ENCODE measurements at regions of chr6 and their contacts with region 1.

Region 1: DNA sequence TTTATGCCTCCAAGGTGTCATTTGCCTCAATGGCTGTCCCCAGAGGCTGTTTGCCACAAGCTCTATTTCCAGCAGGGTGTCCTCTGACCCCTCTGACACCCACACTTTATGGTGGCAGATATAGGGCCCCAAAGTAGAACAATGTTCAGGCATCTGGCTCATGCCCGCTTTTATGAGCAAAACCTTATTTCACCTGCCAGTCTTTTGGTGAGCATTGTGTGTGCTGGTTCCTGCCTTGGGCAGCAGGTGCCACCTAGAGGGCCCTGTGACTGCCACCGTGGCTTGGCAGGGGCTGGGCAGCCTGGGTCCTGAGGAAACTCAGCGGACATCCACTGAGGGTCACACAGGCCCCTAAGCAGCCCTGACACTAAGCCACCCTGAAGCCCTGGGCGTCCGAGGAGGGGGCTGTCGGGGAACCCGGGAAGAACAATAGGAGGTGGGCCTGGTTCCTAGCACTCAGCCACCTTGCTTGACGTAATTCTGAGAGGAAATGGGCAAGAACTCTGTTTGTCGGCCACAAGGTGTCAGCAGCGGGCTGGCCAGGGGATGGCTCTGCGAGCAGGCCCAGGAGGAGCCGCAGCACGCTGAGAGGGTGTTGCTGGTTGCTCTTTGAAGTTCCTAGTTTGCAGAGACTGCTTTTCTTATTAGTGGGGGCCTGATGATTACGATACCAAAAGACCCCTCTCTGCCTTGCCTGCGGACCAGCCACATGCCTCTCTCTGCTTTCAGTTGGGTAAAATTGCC is 148.9 kb downstream of the SCML4 start:
- DNase-seq: peak; percentile 78
- H3K4me3 Mint-ChIP-seq: no peak overlapping the region
- H3K27ac Mint-ChIP-seq: no peak overlapping the region
- H3K4me1 Mint-ChIP-seq: peaks cover 21% of the 10 kb centered on the region
- H3K27me3 Mint-ChIP-seq: peaks cover 17% of the 10 kb centered on the region

Region 2: DNA sequence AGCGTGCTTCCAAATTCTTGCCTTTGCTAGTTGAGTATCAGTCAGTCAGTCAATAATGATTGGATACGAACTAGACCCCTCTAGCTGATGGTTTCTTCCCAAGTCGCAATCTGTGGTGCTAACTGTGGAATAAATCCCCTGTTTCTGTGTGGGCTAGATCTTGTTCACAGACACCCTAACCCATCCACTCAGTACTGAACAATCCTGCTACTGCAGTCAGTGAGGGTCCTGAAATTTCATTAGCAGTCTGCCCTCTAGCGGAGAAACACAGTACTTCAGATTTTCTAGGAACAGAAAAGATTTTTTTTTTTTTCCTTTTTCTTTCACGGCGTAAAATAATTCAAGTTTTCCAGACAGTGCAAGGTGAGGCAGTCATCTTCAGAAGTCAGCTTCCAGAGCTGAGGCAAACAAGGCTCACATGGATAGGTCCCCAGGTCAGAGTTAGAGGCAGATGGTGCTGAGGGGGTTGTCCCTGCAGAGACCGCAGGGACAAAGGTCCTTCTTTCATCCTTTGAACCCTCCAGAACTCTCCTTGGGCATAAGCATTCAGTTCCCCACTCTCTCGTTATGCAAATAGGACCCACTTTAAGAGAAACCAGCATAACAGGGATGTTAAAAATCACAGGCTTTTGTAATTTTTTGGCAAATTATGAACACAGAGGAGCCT is 29.3 kb after region 1 on chr6:
- intact Hi-C with region 1: loop called (anchors 2 kb)
- DNase-seq: no peak
- H3K4me3 Mint-ChIP-seq: no peak overlapping the region
- H3K27ac Mint-ChIP-seq: no peak overlapping the region
- H3K4me1 Mint-ChIP-seq: peaks cover 6% of the 10 kb centered on the region
- H3K27me3 Mint-ChIP-seq: peaks cover 17% of the 10 kb centered on the region

Region 3: DNA sequence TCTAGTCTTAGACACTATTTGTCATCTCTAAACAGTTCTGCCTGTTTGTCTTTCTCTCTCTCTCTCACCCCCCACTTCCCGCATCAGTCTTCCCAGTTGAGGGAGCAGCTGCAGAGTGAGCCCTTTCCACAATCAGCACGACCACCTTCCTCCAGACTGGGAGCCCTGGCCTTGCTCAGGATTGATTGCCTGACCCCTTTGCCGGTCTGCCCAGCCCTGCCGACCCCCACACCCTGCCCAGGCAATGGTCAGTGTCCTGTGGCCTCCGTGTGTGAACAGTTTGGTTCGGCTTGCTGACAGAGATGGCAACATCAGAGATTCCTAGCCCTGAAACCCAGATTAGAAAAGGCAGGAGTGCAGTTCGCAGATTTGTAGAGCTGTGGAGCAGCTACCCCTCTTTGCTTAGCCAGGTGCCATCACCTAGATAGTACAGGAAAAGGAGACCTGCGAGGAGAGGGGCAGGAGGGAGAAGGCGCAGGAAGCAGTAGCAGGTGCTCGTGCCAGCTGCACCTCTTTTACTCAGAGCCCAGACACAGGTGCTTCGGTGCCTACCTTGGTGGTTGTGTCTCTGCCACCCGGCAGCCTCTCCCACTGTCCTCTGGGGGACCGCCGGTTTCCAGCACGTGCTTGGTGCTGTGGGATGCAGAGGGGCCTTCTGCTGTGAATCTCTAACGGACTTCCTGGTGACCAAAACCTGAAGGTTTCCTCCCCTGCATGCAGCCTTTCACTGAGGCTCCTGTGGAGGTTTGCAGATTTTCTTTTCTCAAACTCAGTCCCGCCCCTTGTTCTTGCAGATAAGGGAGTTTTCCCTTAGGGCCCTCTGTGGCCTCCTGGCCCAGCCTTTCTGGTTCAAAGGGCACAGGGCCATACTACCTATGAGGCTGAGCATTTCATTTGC is 56.5 kb after region 1 on chr6:
- intact Hi-C with region 1: loop called (anchors 5 kb)
- DNase-seq: no peak
- H3K4me3 Mint-ChIP-seq: peak overlapping the region; percentile 68
- H3K27ac Mint-ChIP-seq: no peak overlapping the region
- H3K4me1 Mint-ChIP-seq: peaks cover 48% of the 10 kb centered on the region
- H3K27me3 Mint-ChIP-seq: peaks cover 37% of the 10 kb centered on the region

Region 4: GRCh38 chr6:107866606-107867301 is 191.6 kb after region 1 on chr6:
- intact Hi-C with region 1: loop called (anchors 2 kb)
- DNase-seq: no peak
- H3K4me3 Mint-ChIP-seq: no peak overlapping the region
- H3K27ac Mint-ChIP-seq: no peak overlapping the region
- H3K4me1 Mint-ChIP-seq: peaks cover 12% of the 10 kb centered on the region
- H3K27me3 Mint-ChIP-seq: peaks cover 6% of the 10 kb centered on the region

Region 5: DNA sequence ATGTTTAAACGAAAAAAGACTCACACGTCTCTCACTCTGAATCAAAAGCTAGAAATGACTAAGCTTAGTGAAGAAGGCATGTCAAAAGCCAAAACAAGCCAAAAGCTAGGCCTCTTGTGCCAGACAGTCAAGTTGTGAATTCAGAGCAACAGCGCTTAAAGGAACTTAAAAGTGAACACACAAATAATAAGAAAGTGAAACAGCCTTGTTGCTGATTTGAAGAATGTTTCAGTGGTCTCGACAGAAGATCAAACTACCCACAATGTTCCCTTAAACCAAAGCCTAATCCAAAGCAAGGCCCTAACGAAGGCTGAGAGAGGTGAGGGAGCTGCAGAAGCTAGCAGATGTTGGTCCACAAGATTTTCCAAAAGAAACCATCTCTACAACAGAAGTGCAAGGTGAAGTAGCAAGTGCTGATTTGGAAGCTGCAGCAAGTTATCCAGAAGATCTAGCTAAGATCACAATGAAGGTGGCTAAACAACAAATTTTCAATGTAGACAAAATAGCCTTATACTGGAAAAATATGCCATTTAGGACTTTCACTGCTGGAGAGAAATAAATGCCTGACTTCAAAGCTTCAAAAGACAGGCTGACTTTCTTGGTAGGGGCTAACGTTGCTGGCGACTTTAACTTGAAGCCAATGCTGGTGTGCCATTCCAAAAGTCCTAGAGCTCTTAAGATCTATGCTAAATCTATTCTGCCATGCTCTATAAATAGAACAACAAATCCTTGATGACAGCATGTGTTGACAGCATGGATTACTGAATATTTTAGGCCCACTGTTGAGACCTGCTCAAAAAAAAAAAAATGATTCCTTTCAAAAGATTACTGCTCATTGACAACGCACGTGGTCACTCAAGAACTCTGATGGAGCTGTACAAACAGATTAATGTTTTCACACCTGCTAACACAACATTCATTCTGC is 242.5 kb after region 1 on chr6:
- intact Hi-C with region 1: no loop called
- DNase-seq: no peak
- H3K4me3 Mint-ChIP-seq: no peak overlapping the region
- H3K27ac Mint-ChIP-seq: no peak overlapping the region
- H3K4me1 Mint-ChIP-seq: peaks cover 4% of the 10 kb centered on the region
- H3K27me3 Mint-ChIP-seq: no peaks in the 10 kb centered on the region

Region 6: GRCh38 chr6:108052706-108053105 is 377.5 kb after region 1 on chr6:
- intact Hi-C with region 1: loop called (anchors 2 kb)
- DNase-seq: no peak
- H3K4me3 Mint-ChIP-seq: no peak overlapping the region
- H3K27ac Mint-ChIP-seq: no peak overlapping the region
- H3K4me1 Mint-ChIP-seq: no peaks in the 10 kb centered on the region
- H3K27me3 Mint-ChIP-seq: no peaks in the 10 kb centered on the region

Measured in activated T-helper 2 cell treated with anti-CD3 and anti-CD28 coated beads, Interferon-gamma antibody, Interleukin-2, Interleukin-4, amounts not matched to agents 10 μg/mL and 5 μg/mL and 100 μg/mL, durations not matched to agents 14 hours and 24 hours and 36 hours (primary cell).